Calu3 (cell line): ENCODE measurements at regions of chr12 and their contacts with region 1.

Region 1: DNA sequence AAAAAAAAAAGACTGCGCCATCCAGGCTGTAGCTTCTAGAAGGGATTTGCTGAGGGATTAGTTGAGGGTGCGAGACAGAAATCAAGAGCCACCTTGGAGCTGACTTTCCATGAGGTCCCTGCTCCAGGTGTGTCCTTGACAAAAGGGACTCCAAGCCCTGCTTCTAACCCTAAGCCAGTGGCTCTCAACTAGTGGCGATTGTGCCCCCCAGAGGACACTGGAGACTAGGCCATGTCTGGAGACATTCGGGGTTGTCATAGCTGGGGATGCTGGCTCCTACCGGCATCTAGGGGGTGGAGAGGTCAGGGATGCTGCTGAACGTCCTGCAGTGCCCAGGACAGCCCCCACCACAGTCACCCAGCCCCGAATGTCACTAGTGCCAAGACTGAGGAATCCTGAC is 40.6 kb downstream of the SPRING1 start:
- DNase-seq: peak; percentile 39
- H3K4me3 Mint-ChIP-seq: peak overlapping the region; percentile 48
- H3K27ac Mint-ChIP-seq: no peak overlapping the region
- H3K4me1 Mint-ChIP-seq: peaks cover 25% of the 10 kb centered on the region
- H3K27me3 Mint-ChIP-seq: peaks cover 48% of the 10 kb centered on the region
- CTCF ChIP-seq: no peak

Region 2: GRCh38 chr12:116142936-116143898 is 554.1 kb before region 1 on chr12:
- CTCF ChIA-PET with region 1: no interaction called
- intact Hi-C with region 1: loop called (anchors 10 kb)
- DNase-seq: no peak
- H3K4me3 Mint-ChIP-seq: no peak overlapping the region
- H3K27ac Mint-ChIP-seq: peak overlapping the region; percentile 81
- H3K4me1 Mint-ChIP-seq: peaks cover 37% of the 10 kb centered on the region
- H3K27me3 Mint-ChIP-seq: no peaks in the 10 kb centered on the region
- CTCF ChIP-seq: no peak

Region 3: DNA sequence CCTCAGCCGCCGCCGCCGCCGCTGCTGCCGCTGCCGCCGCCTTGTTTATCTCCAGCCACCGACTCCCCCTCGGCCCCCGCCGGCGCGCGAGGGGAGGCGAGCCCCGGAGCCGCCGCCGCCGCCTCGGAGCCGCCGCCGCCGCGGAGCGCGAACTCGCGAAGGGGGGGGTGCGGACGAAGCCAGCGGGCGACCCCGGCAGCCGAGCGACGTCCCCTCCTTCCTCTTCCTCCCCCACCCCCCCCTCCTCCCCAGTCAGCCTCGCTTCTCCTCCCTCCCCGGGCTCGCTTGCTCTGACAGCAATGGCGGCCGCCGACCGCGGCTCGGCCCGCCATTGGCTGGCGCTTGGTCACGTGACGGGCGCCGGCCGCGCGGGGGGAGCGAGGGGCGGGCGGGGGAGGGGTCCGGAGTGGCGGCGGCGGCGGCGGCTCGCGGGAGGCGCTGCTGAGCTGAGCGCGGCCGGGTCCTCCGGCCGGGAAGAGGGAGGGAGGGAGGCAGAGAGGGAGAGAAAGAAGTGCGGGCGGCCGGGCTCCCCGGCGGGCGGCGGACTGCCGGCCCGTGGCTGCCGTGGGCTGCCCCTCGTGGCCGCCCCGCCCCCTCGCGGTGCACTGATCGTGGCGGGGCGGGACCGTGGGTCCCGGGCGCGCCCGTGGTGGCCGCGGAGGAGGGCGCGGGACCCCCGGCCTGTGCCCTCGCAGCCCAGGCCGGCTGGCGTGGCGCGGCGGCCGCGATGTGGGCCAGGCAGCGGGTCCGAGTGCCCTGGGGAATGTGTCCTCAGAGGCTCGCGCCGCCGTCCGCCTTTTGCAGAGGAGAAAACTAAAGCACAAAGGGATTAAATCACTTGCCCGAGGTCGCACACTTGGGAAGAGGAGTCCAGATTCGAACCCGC is 419.7 kb before region 1 on chr12 and contains the start of gene MED13L:
- CTCF ChIA-PET with region 1: no interaction called
- intact Hi-C with region 1: loop called (anchors 10 kb)
- DNase-seq: peak; percentile 92
- H3K4me3 Mint-ChIP-seq: peak within 1 kb of the TSS; percentile 87
- H3K27ac Mint-ChIP-seq: peak within 1 kb of the TSS; percentile 94
- H3K4me1 Mint-ChIP-seq: no peaks in the 10 kb centered on the region
- H3K27me3 Mint-ChIP-seq: peaks cover 10% of the 10 kb centered on the region
- CTCF ChIP-seq: no peak
- total RNA-seq, gene MED13L: 89.0 and 89.6 TPM in 2 replicates

Region 4: GRCh38 chr12:116492703-116493324 is 204.5 kb before region 1 on chr12:
- CTCF ChIA-PET with region 1: no interaction called
- intact Hi-C with region 1: no loop called
- DNase-seq: no peak
- H3K4me3 Mint-ChIP-seq: no peak overlapping the region
- H3K27ac Mint-ChIP-seq: no peak overlapping the region
- H3K4me1 Mint-ChIP-seq: peaks cover 21% of the 10 kb centered on the region
- H3K27me3 Mint-ChIP-seq: peaks cover 4% of the 10 kb centered on the region
- CTCF ChIP-seq: no peak